ENCODE measurements at regions of chr19 and their contacts with region 1.

Region 1: GRCh38 chr19:46840136-46840942 is 10.3 kb downstream of the AP2S1 start:
- DNase-seq: peak; percentile 63
- ATAC-seq: peak; percentile 82
- H3K4me3 Mint-ChIP-seq: no peak overlapping the region
- H3K27ac Mint-ChIP-seq: no peak overlapping the region
- H3K4me1 Mint-ChIP-seq: peaks cover 3% of the 10 kb centered on the region
- H3K27me3 Mint-ChIP-seq: no peaks in the 10 kb centered on the region

Region 2: DNA sequence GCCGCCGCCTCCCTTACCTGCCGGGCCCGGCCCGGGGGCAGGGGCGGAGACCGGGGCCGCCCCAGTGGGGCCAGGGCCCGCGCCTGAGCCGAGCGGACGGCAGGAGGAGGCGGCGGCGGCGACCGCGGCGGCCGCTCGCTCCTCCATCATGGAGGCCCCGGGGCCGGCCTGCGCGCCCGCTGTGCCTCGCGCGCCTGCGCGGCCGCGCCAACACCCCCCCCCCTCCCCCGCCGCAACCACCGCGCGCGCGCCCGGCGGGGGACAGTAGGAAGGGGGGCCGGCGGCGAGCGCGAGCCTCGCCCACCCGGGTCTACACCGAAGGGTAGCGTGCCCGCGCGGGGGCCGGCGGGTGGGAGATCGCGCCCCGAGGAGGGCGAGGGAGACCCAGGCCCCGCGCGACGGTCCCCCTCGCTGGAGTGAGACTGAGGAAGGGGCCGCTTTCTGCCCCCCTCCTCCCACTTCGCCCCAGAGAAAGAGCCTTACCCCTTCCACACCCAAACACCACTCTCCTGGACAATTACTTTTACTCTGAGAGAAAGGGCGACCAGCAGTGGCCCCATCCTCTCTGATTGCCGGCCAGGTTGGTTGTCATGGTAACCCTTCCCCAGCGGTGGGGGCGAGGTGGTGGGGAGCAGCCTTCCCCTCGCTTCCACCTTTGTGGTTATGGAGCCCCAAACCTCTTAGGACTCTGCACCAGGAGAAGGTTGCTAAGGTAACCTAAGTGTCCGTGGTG is 93.9 kb before region 1 on chr19 and contains the start of gene STRN4:
- CTCF ChIA-PET with region 1: interaction called, 203 read pairs
- DNase-seq: peak; percentile 68
- ATAC-seq: peak; percentile 77
- H3K4me3 Mint-ChIP-seq: peak within 1 kb of the TSS; percentile 94
- H3K27ac Mint-ChIP-seq: peak within 1 kb of the TSS; percentile 86
- H3K4me1 Mint-ChIP-seq: peaks cover 52% of the 10 kb centered on the region
- H3K27me3 Mint-ChIP-seq: no peaks in the 10 kb centered on the region
- total RNA-seq, gene STRN4: 93.0 to 95.8 TPM

Region 3: GRCh38 chr19:46782355-46783019 is 57.9 kb before region 1 on chr19:
- CTCF ChIA-PET with region 1: interaction called, 23 read pairs
- DNase-seq: no peak
- ATAC-seq: no peak
- H3K4me3 Mint-ChIP-seq: peak overlapping the region; percentile 90
- H3K27ac Mint-ChIP-seq: peak overlapping the region; percentile 71
- H3K4me1 Mint-ChIP-seq: peaks cover 55% of the 10 kb centered on the region
- H3K27me3 Mint-ChIP-seq: no peaks in the 10 kb centered on the region

Region 4: GRCh38 chr19:46788262-46788967 is 51.9 kb before region 1 on chr19 and contains the start of gene SLC1A5:
- CTCF ChIA-PET with region 1: interaction called, 23 read pairs
- DNase-seq: peak; percentile 99
- ATAC-seq: peak; percentile 72
- H3K4me3 Mint-ChIP-seq: peak within 1 kb of the TSS; percentile 90
- H3K27ac Mint-ChIP-seq: peak within 1 kb of the TSS; percentile 97
- H3K4me1 Mint-ChIP-seq: peaks cover 49% of the 10 kb centered on the region
- H3K27me3 Mint-ChIP-seq: no peaks in the 10 kb centered on the region
- total RNA-seq, gene SLC1A5: 196 to 259 TPM

Region 5: DNA sequence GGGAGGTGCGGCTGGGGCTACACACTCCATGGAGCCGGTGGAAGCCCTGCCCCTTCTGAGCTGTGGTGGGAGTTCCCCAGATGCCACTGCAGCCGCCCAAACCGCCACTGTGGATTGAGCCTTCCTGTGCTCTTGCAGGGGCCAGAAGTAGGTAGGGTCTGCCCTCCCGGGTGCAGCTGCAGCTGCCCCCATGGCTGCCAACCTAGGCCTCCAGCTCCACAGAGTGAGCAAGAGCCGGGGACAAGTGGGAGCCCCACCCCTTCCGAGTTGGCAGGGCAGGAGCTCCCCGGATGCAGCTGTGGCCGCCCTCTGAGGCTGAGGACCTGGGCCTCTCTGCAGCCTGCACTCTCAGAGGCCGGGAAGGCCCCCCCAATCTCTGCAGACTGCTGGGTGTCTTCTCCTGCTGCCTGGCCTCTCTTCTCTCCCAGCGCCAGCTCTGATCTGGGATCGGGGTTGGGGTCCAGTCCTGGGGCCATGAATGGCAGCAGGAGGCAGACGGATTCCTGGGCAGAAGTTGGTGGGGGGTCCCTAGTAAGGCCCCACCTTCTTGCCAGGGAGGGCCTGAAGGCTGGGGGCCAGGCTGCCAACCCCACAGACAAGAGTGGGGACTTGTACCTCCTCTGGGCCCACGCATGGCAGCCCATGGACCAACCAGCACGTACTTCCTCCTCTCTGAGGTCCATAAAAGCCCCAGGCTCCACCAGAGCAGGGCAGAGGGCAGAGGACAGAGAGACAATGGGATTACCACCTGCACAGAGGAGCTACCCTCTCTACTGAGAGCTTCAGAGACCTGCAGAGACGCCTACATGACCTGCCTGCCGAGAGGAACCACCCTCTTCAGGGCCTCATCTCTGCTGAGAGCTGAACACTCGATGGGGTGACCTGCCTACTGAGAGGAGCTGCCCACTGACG is 18.6 kb before region 1 on chr19:
- CTCF ChIA-PET with region 1: interaction called, 23 read pairs
- DNase-seq: peak; percentile 85
- ATAC-seq: peak; percentile 89
- H3K4me3 Mint-ChIP-seq: peak overlapping the region; percentile 18
- H3K27ac Mint-ChIP-seq: peak overlapping the region; percentile 83
- H3K4me1 Mint-ChIP-seq: peaks cover 57% of the 10 kb centered on the region
- H3K27me3 Mint-ChIP-seq: no peaks in the 10 kb centered on the region

Region 6: GRCh38 chr19:46828484-46828883 is 11.9 kb before region 1 on chr19:
- CTCF ChIA-PET with region 1: interaction called, 20 read pairs
- DNase-seq: peak; percentile 55
- ATAC-seq: no peak
- H3K4me3 Mint-ChIP-seq: no peak overlapping the region
- H3K27ac Mint-ChIP-seq: no peak overlapping the region
- H3K4me1 Mint-ChIP-seq: peaks cover 23% of the 10 kb centered on the region
- H3K27me3 Mint-ChIP-seq: no peaks in the 10 kb centered on the region

Region 7: DNA sequence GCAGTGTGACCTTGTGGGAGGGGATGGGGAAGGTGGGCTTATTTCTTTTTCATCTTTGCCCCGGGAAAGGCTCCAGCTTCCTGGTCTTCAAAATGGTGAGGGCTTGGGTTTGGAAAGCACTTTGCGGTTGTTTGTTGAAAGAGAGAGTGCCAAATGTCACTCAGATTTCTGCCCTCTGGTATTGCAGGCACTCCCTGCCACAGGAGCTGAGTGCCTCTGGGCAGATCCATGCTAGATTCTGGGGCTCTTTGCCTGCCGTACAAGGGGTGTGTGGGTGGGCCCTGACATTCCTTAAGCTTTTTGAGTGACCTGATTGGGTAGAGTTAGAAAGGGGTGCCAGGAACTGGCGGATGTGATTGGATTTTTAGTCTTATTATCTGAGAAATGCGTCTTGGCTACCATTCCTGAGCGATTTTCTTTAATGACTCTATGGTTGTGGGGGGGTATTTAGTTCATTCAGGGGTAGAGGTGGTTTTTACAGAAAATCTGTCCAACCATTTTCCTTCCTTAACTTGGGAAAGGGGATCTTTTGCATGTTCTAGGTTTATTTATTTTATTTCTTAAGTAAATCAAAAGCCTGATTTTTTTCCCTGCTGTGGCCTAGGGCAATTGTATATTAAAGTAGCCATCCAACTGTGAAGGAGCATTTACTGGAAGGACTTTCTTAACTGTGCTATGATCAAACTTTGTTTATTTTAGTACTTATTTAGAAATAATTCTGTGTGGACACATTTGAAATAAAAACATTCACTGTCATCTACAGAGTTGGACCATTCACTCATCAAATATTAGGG is 23.7 kb after region 1 on chr19:
- CTCF ChIA-PET with region 1: no interaction called
- DNase-seq: no peak
- ATAC-seq: no peak
- H3K4me3 Mint-ChIP-seq: no peak overlapping the region
- H3K27ac Mint-ChIP-seq: no peak overlapping the region
- H3K4me1 Mint-ChIP-seq: peaks cover 30% of the 10 kb centered on the region
- H3K27me3 Mint-ChIP-seq: no peaks in the 10 kb centered on the region